Astrocyte of the spinal cord (primary cell): ENCODE measurements at regions of chr17 and their contacts with region 1.

Region 1: GRCh38 chr17:40362696-40363110 is 1.8 kb downstream of the GJD3 start:
- DNase-seq: peak; percentile 75
- H3K4me3 ChIP-seq: peak overlapping the region; percentile 39
- CTCF ChIP-seq: peak; percentile 78

Region 2: GRCh38 chr17:40303009-40303657 is 59.6 kb before region 1 on chr17:
- in situ Hi-C with region 1: loop called (anchors 10 kb)
- DNase-seq: peak; percentile 75
- H3K4me3 ChIP-seq: no peak overlapping the region
- CTCF ChIP-seq: peak; percentile 69